GM18951 (cell line): ENCODE measurements at regions of chr15 and their contacts with region 1.

Region 1: DNA sequence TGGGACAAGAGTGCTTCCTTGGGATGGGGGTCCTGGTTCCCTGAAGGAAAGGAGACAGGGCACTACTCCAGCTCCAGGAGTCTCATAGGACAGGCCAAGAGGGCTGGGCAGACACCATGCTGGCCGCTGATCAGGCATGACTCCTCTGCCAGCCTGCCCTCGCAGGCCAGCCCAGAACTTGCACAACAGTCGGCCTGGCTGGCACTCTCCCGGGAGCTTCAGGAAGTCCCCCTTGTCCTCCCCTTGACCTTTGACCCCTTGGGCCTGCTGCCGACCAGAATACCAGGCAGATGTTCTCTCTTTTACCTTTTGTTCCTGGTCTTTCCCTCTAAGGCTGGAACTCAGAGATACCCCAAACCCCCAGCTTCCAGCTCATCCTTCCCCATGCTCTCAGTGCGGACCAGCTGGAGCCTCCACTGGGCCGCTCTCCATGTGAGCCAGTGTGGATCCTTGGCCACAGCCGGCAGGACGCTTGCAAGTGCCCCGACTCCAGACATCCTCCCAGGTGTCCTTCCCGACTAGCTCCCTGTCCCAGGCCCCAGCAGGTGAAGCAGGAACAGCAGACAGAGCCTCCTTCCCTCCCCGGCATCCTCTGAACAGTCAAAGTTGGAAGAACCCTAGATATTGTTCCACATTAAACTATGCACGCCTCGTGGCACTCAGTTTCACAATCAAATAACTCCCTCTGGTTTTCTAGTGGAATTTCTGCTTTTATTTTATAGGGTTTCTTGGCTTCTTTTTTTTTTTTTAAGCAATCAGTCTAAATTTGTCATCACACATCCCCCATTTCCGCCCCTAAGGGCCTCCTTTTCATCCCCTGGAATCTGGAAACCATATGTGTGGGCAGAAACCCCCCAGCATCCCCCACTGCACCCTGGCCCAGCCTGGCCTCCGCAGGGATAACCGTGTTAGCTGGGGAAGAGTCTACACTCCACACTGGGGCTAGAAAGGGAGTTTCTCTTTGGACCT is 15.7 kb downstream of the VPS18 start:
- POLR2A ChIP-seq: no peak

Region 2: GRCh38 chr15:40857601-40858341 is 52.2 kb before region 1 on chr15:
- in situ Hi-C with region 1: no loop called
- POLR2A ChIP-seq: no peak

Region 3: GRCh38 chr15:41018502-41018901 is 108.6 kb after region 1 on chr15:
- in situ Hi-C with region 1: loop called (anchors 10 kb)
- POLR2A ChIP-seq: no peak